ENCODE measurements at regions of chr11 and their contacts with region 1.

Region 1: GRCh38 chr11:73661035-73661628 is 14.8 kb downstream of the PLEKHB1 start:
- DNase-seq: peak; percentile 84
- H3K4me3 ChIP-seq: peak overlapping the region in 2 of 3 experiments; percentile 26 to 32
- H3K27ac ChIP-seq: no peak overlapping the region
- H3K4me1 ChIP-seq: peaks cover 6% of the 10 kb centered on the region
- H3K27me3 ChIP-seq: no peaks in the 10 kb centered on the region
- CTCF ChIP-seq: peak; percentile 96 to 98
- POLR2A ChIP-seq: no peak

Region 2: DNA sequence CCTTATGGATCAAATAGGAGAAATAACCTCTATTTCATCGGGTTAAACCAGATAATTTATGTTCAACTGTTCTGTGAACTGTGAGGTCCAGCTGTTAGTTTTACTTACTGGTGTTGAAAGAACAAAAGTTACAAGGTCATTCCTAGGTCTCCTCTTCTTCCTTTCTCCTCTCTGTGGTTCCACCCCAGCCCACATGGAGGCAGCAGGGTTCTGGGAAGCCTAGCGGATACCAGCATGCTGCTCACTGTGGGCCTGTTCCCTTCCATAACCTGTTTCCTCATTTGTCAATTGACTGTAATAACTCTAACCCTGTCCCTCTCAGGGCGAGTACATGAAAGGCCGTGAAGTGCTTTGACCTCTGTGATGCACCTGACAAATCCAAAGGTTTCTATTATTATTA is 257.1 kb before region 1 on chr11:
- CTCF ChIA-PET with region 1: interaction called, 89 read pairs
- POLR2A ChIA-PET with region 1: no interaction called
- dilution Hi-C with region 1: no loop called
- intact Hi-C with region 1: loop called (anchors 1 kb)
- DNase-seq: peak; percentile 53
- H3K4me3 ChIP-seq: no peak overlapping the region
- H3K27ac ChIP-seq: no peak overlapping the region
- H3K4me1 ChIP-seq: peaks cover 4% of the 10 kb centered on the region
- H3K27me3 ChIP-seq: no peaks in the 10 kb centered on the region
- CTCF ChIP-seq: peak; percentile 44 to 68
- POLR2A ChIP-seq: no peak

Region 3: GRCh38 chr11:73647459-73648100 is 13.6 kb before region 1 on chr11:
- CTCF ChIA-PET with region 1: interaction called, 22 read pairs
- POLR2A ChIA-PET with region 1: no interaction called
- dilution Hi-C with region 1: no loop called
- intact Hi-C with region 1: no loop called
- DNase-seq: peak; percentile 84
- H3K4me3 ChIP-seq: no peak overlapping the region
- H3K27ac ChIP-seq: no peak overlapping the region
- H3K4me1 ChIP-seq: no peaks in the 10 kb centered on the region
- H3K27me3 ChIP-seq: peaks cover 11 to 23% of the 10 kb centered on the region in 2 experiments
- CTCF ChIP-seq: no peak
- POLR2A ChIP-seq: no peak